ENCODE measurements at regions of chr9 and their contacts with region 1.

Region 1: DNA sequence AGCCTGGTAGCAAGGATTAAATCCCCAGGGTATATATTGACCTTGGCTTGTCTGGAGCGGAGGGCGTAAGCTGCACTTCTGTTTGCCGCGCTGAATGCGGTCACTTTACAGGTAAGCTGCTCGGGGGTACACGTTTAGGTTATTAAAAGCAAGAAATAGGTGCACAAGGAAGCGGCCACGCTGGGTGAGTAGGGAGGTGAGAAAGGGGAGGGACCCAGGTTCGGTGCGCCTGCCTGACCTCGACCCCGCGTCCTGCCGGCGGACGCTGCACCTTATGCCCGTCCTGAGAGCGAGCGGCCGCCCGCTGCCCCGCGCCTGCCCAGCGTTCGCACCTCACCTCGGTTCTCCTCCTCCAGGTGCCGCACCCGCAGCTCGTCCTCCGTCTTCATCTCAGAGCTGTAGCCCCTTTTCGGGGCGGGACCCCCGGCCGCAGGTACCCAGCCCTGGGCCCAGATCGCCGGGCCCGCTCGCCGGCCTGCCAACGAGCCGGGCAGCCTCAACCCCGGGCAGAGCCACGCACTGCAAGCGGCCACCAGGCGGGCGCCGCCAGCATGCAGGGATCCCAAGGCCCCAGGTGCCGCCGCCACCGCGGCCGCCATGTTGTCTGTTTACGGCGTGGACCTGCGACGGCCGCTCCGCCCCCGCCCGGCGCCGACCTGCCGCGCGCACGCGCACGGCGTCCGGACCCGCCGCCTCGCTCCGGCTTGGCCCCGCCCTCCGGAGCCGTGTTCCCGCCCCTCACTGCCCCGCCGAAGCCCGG is at the start of gene AUH:
- DNase-seq: peak; percentile 72 to 94 (median 83)
- ATAC-seq: peak; percentile 95
- H3K4me3 ChIP-seq: peak within 1 kb of the TSS; percentile 67 to 78
- H3K4me3 Mint-ChIP-seq: peak within 1 kb of the TSS; percentile 97
- H3K27ac ChIP-seq: peak within 1 kb of the TSS; percentile 64 to 77
- H3K27ac Mint-ChIP-seq: peak within 1 kb of the TSS; percentile 95
- H3K4me1 ChIP-seq: peaks cover 26% of the 10 kb centered on the region
- H3K4me1 Mint-ChIP-seq: peaks cover 54% of the 10 kb centered on the region
- H3K27me3 ChIP-seq: no peaks in the 10 kb centered on the region
- H3K27me3 Mint-ChIP-seq: no peaks in the 10 kb centered on the region
- CTCF ChIP-seq: peak; percentile 25
- total RNA-seq, gene AUH: 13.4 to 15.2 TPM

Region 2: DNA sequence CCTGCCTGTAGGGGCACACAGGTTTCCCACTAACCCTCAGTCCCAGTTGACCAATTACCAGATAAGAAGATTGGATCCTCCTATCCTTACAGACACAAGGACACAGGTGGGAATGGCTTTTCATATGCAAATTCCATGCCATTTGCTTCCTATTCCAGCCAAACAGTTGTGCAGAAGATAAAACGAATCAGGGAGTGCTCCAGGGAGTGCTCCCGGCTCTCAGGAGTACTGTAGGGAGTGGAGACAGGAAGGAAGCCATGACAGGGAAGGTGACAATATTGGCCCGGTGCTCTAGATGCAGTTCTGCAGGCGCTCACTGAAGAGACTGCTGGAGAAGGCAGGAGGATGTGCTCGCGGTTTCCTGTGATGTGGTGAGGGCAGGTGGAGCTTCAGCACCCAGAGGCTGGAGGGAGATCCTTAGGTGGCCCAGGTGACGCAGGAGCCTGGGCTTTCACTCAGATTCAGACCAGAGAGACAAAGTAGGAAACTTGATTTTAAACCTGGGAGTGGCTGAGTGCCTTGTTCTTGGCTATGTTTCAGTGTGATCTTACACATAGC is 259.8 kb before region 1 on chr9:
- CTCF ChIA-PET with region 1: interaction called, 3 read pairs
- POLR2A ChIA-PET with region 1: interaction called, 3 read pairs
- intact Hi-C with region 1: loop called in 1 of 2 experiments (anchors 5 kb)
- DNase-seq: peak; percentile 62 to 95 (median 78)
- ATAC-seq: peak; percentile 86
- H3K4me3 ChIP-seq: peak overlapping the region in 1 of 2 experiments; percentile 1
- H3K4me3 Mint-ChIP-seq: peak overlapping the region; percentile 53
- H3K27ac ChIP-seq: no peak overlapping the region
- H3K27ac Mint-ChIP-seq: peak overlapping the region; percentile 74
- H3K4me1 ChIP-seq: peaks cover 35% of the 10 kb centered on the region
- H3K4me1 Mint-ChIP-seq: peaks cover 37% of the 10 kb centered on the region
- H3K27me3 ChIP-seq: no peaks in the 10 kb centered on the region
- H3K27me3 Mint-ChIP-seq: no peaks in the 10 kb centered on the region
- CTCF ChIP-seq: no peak

Region 3: DNA sequence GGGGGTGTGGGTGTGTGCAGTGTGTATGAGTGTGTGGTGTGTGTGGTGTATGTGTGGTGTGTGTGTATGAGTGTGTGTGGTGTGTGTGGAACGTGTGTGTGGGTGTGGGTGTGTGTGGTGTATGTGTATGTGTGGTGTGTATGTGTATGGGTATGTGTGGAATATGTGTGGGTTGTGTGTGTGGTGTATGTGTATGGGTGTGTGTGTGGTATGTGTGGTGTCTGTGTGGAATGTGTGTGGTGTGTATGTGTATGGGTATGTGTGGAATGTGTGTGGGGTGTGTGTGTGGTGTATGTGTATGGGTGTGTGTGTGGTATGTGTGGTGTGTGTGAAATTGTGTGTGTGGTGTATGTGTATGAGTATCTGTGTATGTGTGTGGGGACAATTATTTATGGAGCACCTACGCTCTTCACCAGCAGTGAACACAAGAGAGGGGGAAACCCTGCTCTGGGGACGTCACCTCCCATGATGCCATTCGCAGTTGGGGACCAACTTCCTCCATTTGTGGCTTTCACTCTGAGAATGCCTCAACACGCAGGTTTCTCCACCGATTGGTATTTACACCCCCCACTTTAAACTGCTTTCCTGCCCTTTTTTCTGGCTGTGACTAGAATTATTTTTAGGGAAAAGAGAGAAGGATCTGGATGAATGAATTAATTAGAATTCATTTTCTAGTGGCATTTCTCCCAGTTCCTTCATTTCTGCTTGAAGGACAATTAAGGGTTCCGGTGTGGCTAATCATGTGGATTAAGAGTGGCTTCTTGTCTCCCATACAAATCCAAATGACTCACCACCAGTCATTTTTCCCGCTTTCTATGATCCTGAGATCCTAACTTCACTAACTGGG is 350.5 kb after region 1 on chr9:
- CTCF ChIA-PET with region 1: no interaction called
- POLR2A ChIA-PET with region 1: no interaction called
- intact Hi-C with region 1: loop called in 1 of 2 experiments (anchors 5 kb)
- DNase-seq: peak; percentile 13 to 88 (median 56)
- ATAC-seq: peak; percentile 94
- H3K4me3 ChIP-seq: peak overlapping the region; percentile 11 to 15
- H3K4me3 Mint-ChIP-seq: no peak overlapping the region
- H3K27ac ChIP-seq: peak overlapping the region in 1 of 2 experiments; percentile 1
- H3K27ac Mint-ChIP-seq: no peak overlapping the region
- H3K4me1 ChIP-seq: peaks cover 4% of the 10 kb centered on the region
- H3K4me1 Mint-ChIP-seq: peaks cover 3% of the 10 kb centered on the region
- H3K27me3 ChIP-seq: peaks cover 0 to 12% of the 10 kb centered on the region in 2 experiments
- H3K27me3 Mint-ChIP-seq: peaks cover 29% of the 10 kb centered on the region
- CTCF ChIP-seq: no peak

Measured in CD8-positive, alpha-beta T cell (primary cell).